H1 (cell line): ENCODE measurements at regions of chr20 and their contacts with region 1.

Region 1: DNA sequence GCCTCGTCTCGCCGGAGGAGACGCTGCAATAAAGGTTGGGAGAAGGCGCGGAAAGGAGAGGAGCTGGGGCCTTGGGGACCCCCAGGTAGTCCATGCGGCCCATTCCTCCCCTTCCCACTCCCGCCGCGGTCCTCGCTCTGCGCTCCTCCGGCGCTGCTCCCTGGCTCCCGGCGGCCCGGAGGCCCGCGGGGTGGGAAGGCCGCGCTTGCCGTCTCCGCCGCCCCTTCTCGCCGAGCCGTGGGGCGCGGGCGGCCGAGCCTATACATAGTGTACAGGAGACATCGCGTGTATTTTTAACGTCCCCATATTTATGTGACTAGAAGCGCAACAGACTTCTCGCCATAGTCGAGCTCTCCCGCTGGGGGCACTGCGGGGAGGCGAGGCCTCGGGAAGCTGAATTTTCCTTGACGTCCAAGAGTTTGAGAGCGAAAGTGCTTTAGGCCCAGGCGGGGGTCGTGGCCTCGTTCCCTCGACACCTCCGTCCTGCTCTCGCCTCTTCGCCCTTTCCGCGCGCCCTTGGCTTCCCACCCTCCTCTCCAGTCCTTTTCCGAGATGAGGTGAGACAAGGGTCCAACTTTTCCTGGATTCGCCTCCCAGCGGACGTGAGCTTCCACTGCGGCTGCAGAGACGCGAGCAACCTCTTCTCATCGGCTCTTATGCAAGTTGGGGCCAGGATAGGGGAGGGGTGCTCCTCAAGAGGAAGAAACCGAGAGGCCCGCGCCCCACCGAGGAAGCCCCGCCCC is 29.0 kb downstream of the SLC12A5 start:
- DNase-seq: no peak
- H3K4me3 ChIP-seq: peak overlapping the region; percentile 8 to 57 (median 36); a peak in 7 of 8 replicates
- H3K27ac ChIP-seq: no peak overlapping the region
- H3K4me1 ChIP-seq: peaks cover 0 to 14% (median 12%) of the 10 kb centered on the region in 4 experiments; a peak in 6 of 7 replicates
- H3K27me3 ChIP-seq: peaks cover 4 to 49% (median 34%) of the 10 kb centered on the region in 4 experiments
- CTCF ChIP-seq: peak; percentile 47 to 64 (median 57)
- EP300 ChIP-seq: no peak
- POLR2A ChIP-seq: no peak
- RAD21 ChIP-seq: peak; percentile 18 to 42; a peak in 3 of 4 replicates

Region 2: DNA sequence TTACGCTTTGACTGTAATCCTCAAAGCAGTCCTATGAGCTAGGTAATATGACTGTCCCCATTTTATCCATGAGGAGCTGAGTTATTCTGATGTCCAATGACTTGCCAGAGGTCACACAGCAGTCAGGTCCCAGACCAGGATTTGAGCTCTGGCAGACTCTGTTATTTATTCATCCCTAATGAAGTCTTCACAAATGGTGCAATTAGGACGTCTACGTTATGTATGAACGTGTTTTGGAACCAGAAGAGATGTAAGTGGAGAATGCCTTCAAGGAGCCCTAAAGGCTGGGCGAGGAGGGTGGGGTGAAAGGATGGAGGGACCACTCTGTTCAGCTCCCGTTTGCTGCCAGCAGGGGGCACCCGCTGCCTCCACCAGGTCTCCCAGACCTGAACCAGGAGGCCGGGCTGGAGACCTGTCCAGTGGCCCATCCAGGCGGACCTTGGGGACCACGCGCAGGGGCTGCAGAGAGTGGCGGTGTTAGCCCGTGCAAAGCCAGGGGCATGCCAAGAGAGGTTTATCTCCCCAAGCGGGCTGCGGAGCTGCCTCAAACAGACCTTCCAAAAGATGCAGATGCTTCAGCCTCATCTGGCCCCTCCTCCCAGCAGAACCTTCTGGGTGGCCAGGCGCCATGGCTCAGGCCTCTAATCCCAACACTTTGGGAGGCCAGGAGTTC is 70.8 kb before region 1 on chr20:
- CTCF ChIA-PET with region 1: interaction called, 14 read pairs
- POLR2A ChIA-PET with region 1: interaction called, 7 read pairs
- DNase-seq: peak in 1 of 2 experiments; percentile 95
- H3K4me3 ChIP-seq: no peak overlapping the region
- H3K27ac ChIP-seq: no peak overlapping the region
- H3K4me1 ChIP-seq: peaks cover 0 to 8% (median 6%) of the 10 kb centered on the region in 4 experiments; a peak in 5 of 7 replicates
- H3K27me3 ChIP-seq: no peaks in the 10 kb centered on the region
- CTCF ChIP-seq: peak; percentile 90 to 96 (median 95)
- EP300 ChIP-seq: no peak
- POLR2A ChIP-seq: no peak
- RAD21 ChIP-seq: peak; percentile 79 to 89

Region 3: GRCh38 chr20:46040902-46041535 is 17.0 kb before region 1 on chr20:
- CTCF ChIA-PET with region 1: interaction called, 20 read pairs
- POLR2A ChIA-PET with region 1: interaction called, 6 read pairs
- DNase-seq: peak in 1 of 2 experiments; percentile 93
- H3K4me3 ChIP-seq: no peak overlapping the region
- H3K27ac ChIP-seq: no peak overlapping the region
- H3K4me1 ChIP-seq: peaks cover 0 to 7% (median 3%) of the 10 kb centered on the region in 4 experiments; a peak in 3 of 7 replicates
- H3K27me3 ChIP-seq: peaks cover 0 to 7% (median 2%) of the 10 kb centered on the region in 4 experiments; a peak in 3 of 7 replicates
- CTCF ChIP-seq: no peak
- EP300 ChIP-seq: no peak
- POLR2A ChIP-seq: no peak
- RAD21 ChIP-seq: no peak

Region 4: GRCh38 chr20:46070215-46070900 is 12.3 kb after region 1 on chr20:
- CTCF ChIA-PET with region 1: interaction called, 14 read pairs
- POLR2A ChIA-PET with region 1: interaction called, 8 read pairs
- DNase-seq: peak in 1 of 2 experiments; percentile 28
- H3K4me3 ChIP-seq: no peak overlapping the region
- H3K27ac ChIP-seq: no peak overlapping the region
- H3K4me1 ChIP-seq: peaks cover 4 to 14% (median 7%) of the 10 kb centered on the region in 4 experiments; a peak in 5 of 7 replicates
- H3K27me3 ChIP-seq: no peaks in the 10 kb centered on the region
- CTCF ChIP-seq: no peak
- EP300 ChIP-seq: no peak
- POLR2A ChIP-seq: no peak
- RAD21 ChIP-seq: no peak